PC-9 (cell line): ENCODE measurements at regions of chr21 and their contacts with region 1.

Region 1: GRCh38 chr21:35149698-35150097 is 100.6 kb upstream of the RUNX1 start:
- DNase-seq: peak in 1 of 2 experiments; percentile 79
- H3K4me3 ChIP-seq: no peak overlapping the region
- H3K27ac ChIP-seq: peak overlapping the region; percentile 86
- H3K4me1 ChIP-seq: peaks cover 17% of the 10 kb centered on the region
- H3K27me3 ChIP-seq: no peaks in the 10 kb centered on the region
- CTCF ChIP-seq: no peak

Region 2: DNA sequence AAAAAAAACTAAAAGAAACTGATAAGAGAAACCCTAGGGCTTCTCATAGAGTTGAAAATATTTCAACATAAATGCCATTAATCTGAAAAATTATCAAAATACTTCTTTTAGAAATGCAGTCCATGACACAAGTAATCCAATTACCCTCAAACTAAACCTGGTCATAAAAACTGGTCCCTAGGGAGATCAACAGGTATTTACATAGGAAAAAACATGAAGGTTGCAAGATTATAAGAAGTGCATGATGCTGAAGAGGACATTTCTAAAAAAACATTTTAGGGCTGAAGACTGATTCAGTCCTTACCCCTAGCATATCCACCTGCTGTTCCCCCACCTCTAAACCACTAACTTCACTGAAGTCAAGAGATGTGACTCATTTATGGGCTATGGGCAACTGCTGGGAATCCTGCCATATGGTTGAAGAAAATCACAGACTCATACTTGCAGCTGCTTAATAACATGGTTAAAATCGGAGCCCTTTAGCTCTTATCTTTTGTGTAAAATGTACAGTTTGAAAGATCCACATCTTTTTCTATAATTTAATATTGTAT is 30.4 kb after region 1 on chr21:
- CTCF ChIA-PET with region 1: no interaction called
- POLR2A ChIA-PET with region 1: no interaction called
- intact Hi-C with region 1: loop called (anchors 5 kb)
- DNase-seq: peak in 1 of 2 experiments; percentile 63
- H3K4me3 ChIP-seq: no peak overlapping the region
- H3K27ac ChIP-seq: 0 out of 2 replicates have a peak overlapping the region, but pooled peaks have one; percentile 23
- H3K4me1 ChIP-seq: peaks cover 13% of the 10 kb centered on the region
- H3K27me3 ChIP-seq: no peaks in the 10 kb centered on the region
- CTCF ChIP-seq: no peak

Region 3: DNA sequence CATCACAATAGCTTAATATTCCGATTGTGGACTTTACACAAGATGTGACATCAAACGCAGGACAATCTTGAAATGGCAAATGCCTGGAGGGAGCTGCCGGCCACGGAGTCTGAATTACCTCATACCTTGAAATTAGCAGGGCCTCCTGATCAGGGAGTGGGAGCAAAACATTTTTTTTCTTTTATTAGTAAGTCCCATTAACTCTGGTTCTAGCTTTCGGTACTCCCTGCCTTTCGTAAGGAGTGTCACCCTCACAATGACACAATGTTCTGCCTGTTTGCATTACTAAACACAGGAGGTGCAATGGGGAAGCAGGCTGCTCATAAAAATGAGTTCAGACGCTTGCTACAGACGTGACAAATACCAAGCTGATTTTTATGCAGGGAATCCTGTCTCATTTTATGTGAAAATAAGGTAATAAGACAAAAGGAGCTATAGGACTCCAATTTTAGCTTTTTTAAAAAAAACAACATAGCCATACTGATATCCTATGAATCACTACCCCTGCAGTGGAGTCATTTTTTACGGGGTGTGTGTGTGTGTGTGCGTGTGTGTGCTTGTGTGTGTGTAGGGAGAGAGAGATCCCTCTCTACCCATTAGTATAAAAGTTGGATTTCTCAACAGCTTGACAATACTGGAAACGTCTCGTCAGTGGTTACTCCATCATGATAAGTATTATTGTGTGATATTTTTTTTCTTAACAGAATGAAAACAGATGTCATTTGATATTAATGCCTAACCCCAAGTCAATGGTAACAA is 104.5 kb after region 1 on chr21:
- CTCF ChIA-PET with region 1: no interaction called
- POLR2A ChIA-PET with region 1: no interaction called
- intact Hi-C with region 1: no loop called
- DNase-seq: no peak
- H3K4me3 ChIP-seq: no peak overlapping the region
- H3K27ac ChIP-seq: peak overlapping the region; percentile 99; the same call in 1 of the 2 replicates
- H3K4me1 ChIP-seq: peaks cover 40% of the 10 kb centered on the region
- H3K27me3 ChIP-seq: no peaks in the 10 kb centered on the region
- CTCF ChIP-seq: no peak